CD8-positive, alpha-beta T cell (primary cell): ENCODE measurements at regions of chr16 and their contacts with region 1.

Region 1: GRCh38 chr16:11586856-11587642 is at the start of gene LITAF:
- DNase-seq: peak in 8 of 9 experiments; percentile 34 to 82 (median 67)
- ATAC-seq: peak; percentile 59
- H3K4me3 ChIP-seq: peak within 1 kb of the TSS; percentile 71 to 93
- H3K4me3 Mint-ChIP-seq: peak within 1 kb of the TSS; percentile 97
- H3K27ac ChIP-seq: peak within 1 kb of the TSS; percentile 72 to 89
- H3K27ac Mint-ChIP-seq: peak within 1 kb of the TSS; percentile 98
- H3K4me1 ChIP-seq: peaks cover 33% of the 10 kb centered on the region
- H3K4me1 Mint-ChIP-seq: peaks cover 41% of the 10 kb centered on the region
- H3K27me3 ChIP-seq: no peaks in the 10 kb centered on the region
- H3K27me3 Mint-ChIP-seq: no peaks in the 10 kb centered on the region
- CTCF ChIP-seq: no peak
- total RNA-seq, gene LITAF: 543 TPM

Region 2: GRCh38 chr16:10787304-10787703 is 799.7 kb before region 1 on chr16:
- CTCF ChIA-PET with region 1: no interaction called
- POLR2A ChIA-PET with region 1: no interaction called
- intact Hi-C with region 1: no loop called
- DNase-seq: no peak
- ATAC-seq: no peak
- H3K4me3 ChIP-seq: no peak overlapping the region
- H3K4me3 Mint-ChIP-seq: no peak overlapping the region
- H3K27ac ChIP-seq: no peak overlapping the region
- H3K27ac Mint-ChIP-seq: no peak overlapping the region
- H3K4me1 ChIP-seq: no peaks in the 10 kb centered on the region
- H3K4me1 Mint-ChIP-seq: no peaks in the 10 kb centered on the region
- H3K27me3 ChIP-seq: no peaks in the 10 kb centered on the region
- H3K27me3 Mint-ChIP-seq: no peaks in the 10 kb centered on the region
- CTCF ChIP-seq: no peak

Region 3: GRCh38 chr16:11550791-11551498 is 36.1 kb before region 1 on chr16:
- CTCF ChIA-PET with region 1: no interaction called
- POLR2A ChIA-PET with region 1: interaction called, 8 read pairs
- intact Hi-C with region 1: loop called in 1 of 2 experiments (anchors 5 kb)
- DNase-seq: no peak
- ATAC-seq: no peak
- H3K4me3 ChIP-seq: no peak overlapping the region
- H3K4me3 Mint-ChIP-seq: no peak overlapping the region
- H3K27ac ChIP-seq: peak overlapping the region in 1 of 2 experiments; percentile 1
- H3K27ac Mint-ChIP-seq: peak overlapping the region; percentile 57
- H3K4me1 ChIP-seq: peaks cover 3% of the 10 kb centered on the region
- H3K4me1 Mint-ChIP-seq: peaks cover 25% of the 10 kb centered on the region
- H3K27me3 ChIP-seq: no peaks in the 10 kb centered on the region
- H3K27me3 Mint-ChIP-seq: no peaks in the 10 kb centered on the region
- CTCF ChIP-seq: no peak

Region 4: GRCh38 chr16:11560701-11561449 is 26.2 kb before region 1 on chr16:
- CTCF ChIA-PET with region 1: interaction called, 11 read pairs
- POLR2A ChIA-PET with region 1: interaction called, 15 read pairs
- intact Hi-C with region 1: loop called (anchors 1 kb)
- DNase-seq: peak; percentile 55 to 97 (median 76)
- ATAC-seq: peak; percentile 82
- H3K4me3 ChIP-seq: peak overlapping the region; percentile 42 to 56
- H3K4me3 Mint-ChIP-seq: peak overlapping the region; percentile 83
- H3K27ac ChIP-seq: peak overlapping the region; percentile 90 to 97
- H3K27ac Mint-ChIP-seq: peak overlapping the region; percentile 99
- H3K4me1 ChIP-seq: peaks cover 83% of the 10 kb centered on the region
- H3K4me1 Mint-ChIP-seq: peaks cover 84% of the 10 kb centered on the region
- H3K27me3 ChIP-seq: no peaks in the 10 kb centered on the region
- H3K27me3 Mint-ChIP-seq: no peaks in the 10 kb centered on the region
- CTCF ChIP-seq: no peak

Region 5: GRCh38 chr16:11619327-11619851 is 32.3 kb after region 1 on chr16:
- CTCF ChIA-PET with region 1: interaction called, 7 read pairs
- POLR2A ChIA-PET with region 1: interaction called, 30 read pairs
- intact Hi-C with region 1: loop called (anchors 2 to 5 kb)
- DNase-seq: peak in 7 of 9 experiments; percentile 28 to 75 (median 48)
- ATAC-seq: peak; percentile 25
- H3K4me3 ChIP-seq: no peak overlapping the region
- H3K4me3 Mint-ChIP-seq: peak overlapping the region; percentile 58
- H3K27ac ChIP-seq: peak overlapping the region; percentile 40 to 86
- H3K27ac Mint-ChIP-seq: peak overlapping the region; percentile 98
- H3K4me1 ChIP-seq: peaks cover 77% of the 10 kb centered on the region
- H3K4me1 Mint-ChIP-seq: peaks cover 70% of the 10 kb centered on the region
- H3K27me3 ChIP-seq: no peaks in the 10 kb centered on the region
- H3K27me3 Mint-ChIP-seq: no peaks in the 10 kb centered on the region
- CTCF ChIP-seq: no peak